IMR-90 (cell line): ENCODE measurements at regions of chr3 and their contacts with region 1.

Region 1: GRCh38 chr3:159947220-159947619 is 41.4 kb upstream of the IL12A start:
- DNase-seq: peak; percentile 94
- ATAC-seq: peak; percentile 84
- H3K4me3 ChIP-seq: no peak overlapping the region
- H3K27ac ChIP-seq: no peak overlapping the region; the same call in 1 of the 2 replicates
- H3K4me1 ChIP-seq: peaks cover 5% of the 10 kb centered on the region
- H3K27me3 ChIP-seq: no peaks in the 10 kb centered on the region
- CTCF ChIP-seq: no peak
- POLR2A ChIP-seq: no peak
- RAD21 ChIP-seq: no peak

Region 2: DNA sequence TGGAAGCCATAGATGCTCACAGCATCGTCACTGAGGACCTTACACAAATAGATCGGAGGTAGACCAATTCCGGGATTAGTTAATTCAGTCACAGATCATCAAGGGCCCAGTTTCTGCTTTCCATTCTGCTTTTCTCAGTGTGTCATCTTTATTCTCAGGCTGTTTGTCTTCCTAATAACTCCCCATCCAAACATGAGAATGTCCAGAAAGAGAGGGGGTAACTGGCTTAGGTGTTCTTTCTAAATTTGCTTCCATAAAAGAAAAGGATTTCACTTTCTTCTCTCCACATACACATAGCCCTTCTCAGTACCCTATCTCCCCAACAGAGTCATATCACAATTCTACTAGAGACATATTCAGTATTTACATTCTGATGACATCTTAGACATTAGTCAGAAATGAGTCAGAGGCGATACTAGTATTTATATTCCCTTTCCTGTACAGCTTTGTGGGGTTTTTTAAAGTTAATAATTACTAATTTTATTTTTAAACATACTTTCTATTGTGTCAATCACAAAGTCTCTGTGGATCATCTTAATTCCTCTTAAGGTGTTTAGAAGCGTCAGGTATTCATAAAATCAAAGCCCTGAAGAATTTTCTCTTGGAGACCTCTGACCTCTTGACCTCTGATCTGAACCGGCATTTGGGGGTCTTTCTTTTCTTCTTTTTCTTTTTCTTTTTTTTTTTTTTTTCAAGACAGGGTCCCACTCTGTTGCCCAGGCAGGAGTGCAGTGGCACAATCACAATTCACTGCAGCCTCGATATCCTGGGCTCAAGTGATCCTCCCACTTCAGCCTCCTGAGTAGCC is 17.1 kb after region 1 on chr3:
- CTCF ChIA-PET with region 1: interaction called, 3 read pairs
- POLR2A ChIA-PET with region 1: no interaction called
- dilution Hi-C with region 1: no loop called
- in situ Hi-C with region 1: no loop called
- intact Hi-C with region 1: loop called (anchors 2 kb)
- DNase-seq: peak; percentile 94
- ATAC-seq: peak; percentile 97
- H3K4me3 ChIP-seq: no peak overlapping the region
- H3K27ac ChIP-seq: peak overlapping the region; percentile 80
- H3K4me1 ChIP-seq: peaks cover 6% of the 10 kb centered on the region; the same call in 1 of the 2 replicates
- H3K27me3 ChIP-seq: no peaks in the 10 kb centered on the region
- CTCF ChIP-seq: no peak
- POLR2A ChIP-seq: no peak
- RAD21 ChIP-seq: no peak